PC-3 (cell line): ENCODE measurements at regions of chr5 and their contacts with region 1.

Region 1: DNA sequence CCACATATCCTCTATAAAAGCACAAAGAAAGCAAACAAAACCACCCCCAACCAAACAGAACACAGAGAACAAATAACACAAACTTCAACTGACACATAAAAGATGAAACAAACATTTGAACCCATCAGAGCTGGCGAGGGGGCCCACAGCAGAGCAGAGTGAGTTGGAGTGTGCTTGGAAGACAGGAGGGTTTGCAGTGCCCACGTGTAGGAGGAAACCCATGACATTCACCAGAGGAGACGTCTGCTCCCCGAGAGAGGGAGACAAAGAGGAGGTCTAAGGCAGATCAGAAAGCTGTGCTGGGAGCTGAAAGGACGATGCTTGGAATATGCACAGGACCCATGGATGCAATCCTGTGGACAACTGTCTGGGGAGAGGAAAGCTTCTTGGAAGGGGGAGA is 27.0 kb downstream of the MRPL36 start:
- DNase-seq: peak; percentile 67
- ATAC-seq: peak; percentile 98
- H3K4me3 ChIP-seq: no peak overlapping the region
- H3K27ac ChIP-seq: no peak overlapping the region
- H3K4me1 ChIP-seq: no peaks in the 10 kb centered on the region
- H3K27me3 ChIP-seq: peaks cover 4% of the 10 kb centered on the region; the same call in 1 of the 2 replicates
- CTCF ChIP-seq: peak; percentile 68

Region 2: DNA sequence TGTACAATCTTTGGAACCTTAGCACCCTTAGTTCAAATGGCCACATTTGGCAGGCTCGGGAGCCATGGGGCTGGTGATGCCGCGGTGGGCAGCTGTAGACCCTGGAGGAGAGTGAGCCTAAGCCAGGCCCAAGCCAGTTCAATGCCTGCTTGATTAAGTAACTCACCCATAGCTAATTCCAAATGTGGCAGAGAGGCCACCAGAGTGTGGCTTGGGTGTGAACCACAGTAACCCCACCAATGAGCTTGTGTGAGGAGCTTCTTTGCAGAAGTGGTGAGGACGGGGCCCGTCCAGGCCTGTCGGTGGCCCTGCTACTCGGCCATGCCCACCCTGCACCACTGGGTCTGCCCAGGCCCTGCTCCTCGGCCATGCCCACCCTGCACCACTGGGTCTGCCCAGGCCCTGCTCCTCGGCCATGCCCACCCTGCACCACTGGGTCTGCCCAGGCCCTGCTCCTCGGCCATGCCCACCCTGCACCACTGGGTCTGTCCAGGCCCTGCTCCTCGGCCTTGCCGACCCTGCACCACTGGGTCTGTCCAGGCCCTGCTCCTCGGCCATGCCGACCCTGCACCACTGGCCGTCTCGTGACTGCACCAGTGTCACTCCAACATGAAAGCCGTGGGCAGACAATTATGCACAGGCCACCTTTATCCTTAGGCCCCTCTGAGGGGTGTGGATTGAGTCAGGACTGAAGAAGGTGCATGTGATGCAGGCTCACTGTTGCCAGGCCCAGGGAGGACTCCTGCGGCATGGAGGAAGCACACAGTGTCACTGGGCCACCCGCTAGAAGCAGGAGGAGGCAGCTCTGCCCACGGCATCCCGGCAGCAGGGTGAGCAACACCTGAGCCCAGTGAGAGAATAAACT is 48.4 kb before region 1 on chr5:
- CTCF ChIA-PET with region 1: no interaction called
- POLR2A ChIA-PET with region 1: no interaction called
- intact Hi-C with region 1: no loop called
- DNase-seq: no peak
- ATAC-seq: no peak
- H3K4me3 ChIP-seq: no peak overlapping the region
- H3K27ac ChIP-seq: no peak overlapping the region
- H3K4me1 ChIP-seq: no peaks in the 10 kb centered on the region
- H3K27me3 ChIP-seq: peaks cover 55% of the 10 kb centered on the region
- CTCF ChIP-seq: no peak

Region 3: DNA sequence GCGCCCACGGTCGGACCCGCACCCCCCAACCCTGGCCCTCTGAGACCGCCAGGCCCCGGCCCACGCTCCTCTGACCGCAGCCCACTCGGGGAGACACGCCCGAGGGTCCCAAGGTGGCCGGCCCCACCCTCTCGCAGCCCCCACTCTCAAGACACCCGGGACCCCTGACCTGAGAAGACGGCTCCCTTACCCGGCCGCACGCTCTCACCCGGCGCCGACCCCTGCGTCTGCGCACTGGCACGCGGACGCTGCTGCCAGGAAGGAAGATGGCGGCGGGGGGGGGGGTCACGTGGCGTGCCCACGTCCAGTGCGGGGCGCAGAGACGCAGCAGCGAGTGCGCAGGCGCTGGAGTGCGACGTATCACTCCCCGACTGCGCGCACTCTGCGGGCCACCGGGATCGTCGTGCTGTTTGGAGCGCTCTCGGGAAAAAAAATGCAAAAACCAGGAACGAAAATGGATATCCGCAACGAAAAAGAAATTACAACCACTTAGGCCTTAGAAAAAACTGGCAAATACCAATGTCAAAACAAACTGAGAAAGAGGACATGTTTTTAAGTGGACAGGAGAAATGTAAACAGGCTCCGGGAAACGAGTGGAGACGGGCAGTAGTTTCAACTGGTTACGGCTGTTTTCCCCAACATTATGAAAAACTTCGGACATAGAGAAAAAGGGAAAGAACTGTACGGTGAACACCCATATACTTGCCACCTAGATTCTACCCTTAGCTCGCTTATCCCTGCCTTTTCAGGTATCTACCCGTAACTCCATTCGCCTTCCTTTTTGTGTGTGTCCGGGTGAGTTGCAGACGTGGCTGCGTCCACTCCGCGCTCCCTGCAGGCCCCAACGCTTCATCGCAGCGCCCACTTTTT is 27.2 kb after region 1 on chr5 and contains the start of gene MRPL36:
- CTCF ChIA-PET with region 1: interaction called, 7 read pairs
- POLR2A ChIA-PET with region 1: no interaction called
- intact Hi-C with region 1: loop called (anchors 2 kb)
- DNase-seq: peak; percentile 92
- ATAC-seq: peak; percentile 75
- H3K4me3 ChIP-seq: peak within 1 kb of the TSS; percentile 97
- H3K27ac ChIP-seq: peak within 1 kb of the TSS; percentile 59
- H3K4me1 ChIP-seq: peaks cover 30% of the 10 kb centered on the region
- H3K27me3 ChIP-seq: no peaks in the 10 kb centered on the region
- CTCF ChIP-seq: no peak
- total RNA-seq, gene MRPL36: 91.9 and 116 TPM in 2 replicates

Region 4: GRCh38 chr5:2038321-2039179 is 265.9 kb after region 1 on chr5:
- CTCF ChIA-PET with region 1: no interaction called
- POLR2A ChIA-PET with region 1: no interaction called
- intact Hi-C with region 1: loop called (anchors 5 kb)
- DNase-seq: peak; percentile 49
- ATAC-seq: peak; percentile 94
- H3K4me3 ChIP-seq: peak overlapping the region; percentile 55
- H3K27ac ChIP-seq: no peak overlapping the region
- H3K4me1 ChIP-seq: no peaks in the 10 kb centered on the region
- H3K27me3 ChIP-seq: peaks cover 60% of the 10 kb centered on the region
- CTCF ChIP-seq: peak; percentile 77